GM10248 (cell line): ENCODE measurements at regions of chr11 and their contacts with region 1.

Region 1: DNA sequence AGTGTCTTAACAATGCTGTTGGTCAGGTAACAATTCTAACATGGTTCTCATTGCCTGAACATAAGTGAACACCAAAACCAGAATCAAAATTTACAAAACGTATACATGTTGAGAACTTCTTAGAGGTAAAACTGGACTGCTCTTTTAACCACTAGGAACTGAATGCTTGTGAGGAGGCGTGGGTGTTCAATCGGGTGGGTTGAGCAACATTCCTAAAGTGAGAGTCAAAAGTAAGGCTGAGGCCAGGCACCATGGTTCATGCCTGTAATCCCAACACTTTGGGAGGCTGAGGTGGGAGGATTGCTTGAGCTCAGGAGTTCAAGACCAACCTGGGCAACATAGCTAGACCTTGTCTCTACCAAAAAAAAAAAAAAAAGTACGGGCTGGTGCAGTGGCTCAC is 11.5 kb downstream of the PPME1 start:
- DNase-seq: no peak
- CTCF ChIP-seq: no peak

Region 2: GRCh38 chr11:74154621-74155281 is 27.9 kb before region 1 on chr11:
- CTCF ChIA-PET with region 1: no interaction called
- POLR2A ChIA-PET with region 1: no interaction called
- DNase-seq: no peak
- CTCF ChIP-seq: no peak

Region 3: GRCh38 chr11:74170694-74171629 is 11.7 kb before region 1 on chr11 and contains the starts of genes C2CD3 and PPME1:
- CTCF ChIA-PET with region 1: interaction called, 16 read pairs
- POLR2A ChIA-PET with region 1: interaction called, 7 read pairs
- DNase-seq: peak; percentile 95
- CTCF ChIP-seq: peak; percentile 7